T-cell (primary cell): ENCODE measurements at regions of chr17 and their contacts with region 1.

Region 1: GRCh38 chr17:65324611-65325342 is 187.6 kb downstream of the RGS9 start:
- DNase-seq: no peak
- ATAC-seq: no peak
- H3K4me3 ChIP-seq: no peak overlapping the region
- H3K4me3 Mint-ChIP-seq: no peak overlapping the region
- H3K27ac ChIP-seq: no peak overlapping the region
- H3K27ac Mint-ChIP-seq: no peak overlapping the region
- H3K4me1 ChIP-seq: no peaks in the 10 kb centered on the region
- H3K4me1 Mint-ChIP-seq: peaks cover 0 to 2% (median 2%) of the 10 kb centered on the region in 3 donors
- H3K27me3 ChIP-seq: no peaks in the 10 kb centered on the region
- H3K27me3 Mint-ChIP-seq: peaks cover 0 to 4% of the 10 kb centered on the region in 2 donors

Region 2: GRCh38 chr17:65198653-65199382 is 126.0 kb before region 1 on chr17:
- CTCF ChIA-PET with region 1: interaction called in 1 of 2 experiments, 11 read pairs
- POLR2A ChIA-PET with region 1: no interaction called
- DNase-seq: peak in 6 of 35 experiments; percentile 8 to 73 (median 16)
- ATAC-seq: peak; percentile 46 to 64 (median 56)
- H3K4me3 ChIP-seq: no peak overlapping the region
- H3K4me3 Mint-ChIP-seq: no peak overlapping the region
- H3K27ac ChIP-seq: no peak overlapping the region
- H3K27ac Mint-ChIP-seq: no peak overlapping the region
- H3K4me1 ChIP-seq: peaks cover 0 to 4% of the 10 kb centered on the region in 2 experiments
- H3K4me1 Mint-ChIP-seq: peaks cover 3 to 5% (median 4%) of the 10 kb centered on the region in 3 donors
- H3K27me3 ChIP-seq: peaks cover 0 to 5% of the 10 kb centered on the region in 2 experiments
- H3K27me3 Mint-ChIP-seq: peaks cover 0 to 2% of the 10 kb centered on the region in 2 donors